ENCODE measurements at regions of chr9 and their contacts with region 1.

Region 1: DNA sequence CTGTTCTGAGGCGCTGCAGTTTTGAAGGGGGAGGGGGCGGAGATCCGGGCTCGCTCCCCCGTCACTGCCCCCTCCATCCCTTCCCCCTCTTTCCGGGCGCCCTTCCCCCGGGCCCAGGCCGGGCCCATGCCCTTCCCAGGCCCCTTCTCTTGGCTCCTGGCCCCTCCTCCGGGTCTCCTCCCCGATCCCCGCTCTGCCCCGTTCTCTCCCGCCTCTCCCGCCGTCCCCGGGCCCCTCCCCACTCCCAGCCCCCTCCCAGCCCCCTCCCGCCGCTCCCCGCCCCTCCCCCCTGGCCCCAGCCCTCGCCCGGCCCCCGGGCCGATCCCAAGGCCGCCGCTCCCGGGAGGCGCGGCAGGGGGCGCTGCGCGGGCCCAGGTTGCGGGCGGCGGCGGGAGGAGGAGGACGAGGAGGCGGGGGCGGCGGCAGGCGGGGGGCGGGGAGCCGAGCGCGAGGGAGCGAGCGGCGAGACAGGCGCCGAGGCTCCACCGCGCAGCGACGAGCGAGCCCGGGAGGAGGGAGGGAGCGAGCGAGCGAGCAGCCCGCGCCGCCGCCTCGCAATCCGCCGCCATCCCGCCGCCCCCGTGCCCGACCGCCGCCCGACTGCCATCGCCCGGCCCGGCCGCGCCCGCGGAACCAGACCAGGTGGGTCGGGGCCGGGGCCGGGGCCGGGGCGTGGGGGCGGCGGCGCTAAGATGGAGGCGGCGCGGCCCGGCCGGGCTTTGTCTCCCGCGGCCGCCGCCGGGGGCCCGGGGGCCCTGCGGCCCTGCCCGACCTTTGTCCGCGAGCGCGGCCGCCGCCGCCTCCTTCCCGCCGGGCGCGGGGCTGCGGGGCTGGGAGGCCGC is at the start of gene PRRC2B:
- DNase-seq: peak; percentile 76
- H3K4me3 Mint-ChIP-seq: peak within 1 kb of the TSS; percentile 89
- H3K27ac Mint-ChIP-seq: peak within 1 kb of the TSS; percentile 93
- H3K4me1 Mint-ChIP-seq: peaks cover 49% of the 10 kb centered on the region
- H3K27me3 Mint-ChIP-seq: peaks cover 21% of the 10 kb centered on the region
- total RNA-seq, gene PRRC2B: 103 and 108 TPM in 2 replicates

Region 2: DNA sequence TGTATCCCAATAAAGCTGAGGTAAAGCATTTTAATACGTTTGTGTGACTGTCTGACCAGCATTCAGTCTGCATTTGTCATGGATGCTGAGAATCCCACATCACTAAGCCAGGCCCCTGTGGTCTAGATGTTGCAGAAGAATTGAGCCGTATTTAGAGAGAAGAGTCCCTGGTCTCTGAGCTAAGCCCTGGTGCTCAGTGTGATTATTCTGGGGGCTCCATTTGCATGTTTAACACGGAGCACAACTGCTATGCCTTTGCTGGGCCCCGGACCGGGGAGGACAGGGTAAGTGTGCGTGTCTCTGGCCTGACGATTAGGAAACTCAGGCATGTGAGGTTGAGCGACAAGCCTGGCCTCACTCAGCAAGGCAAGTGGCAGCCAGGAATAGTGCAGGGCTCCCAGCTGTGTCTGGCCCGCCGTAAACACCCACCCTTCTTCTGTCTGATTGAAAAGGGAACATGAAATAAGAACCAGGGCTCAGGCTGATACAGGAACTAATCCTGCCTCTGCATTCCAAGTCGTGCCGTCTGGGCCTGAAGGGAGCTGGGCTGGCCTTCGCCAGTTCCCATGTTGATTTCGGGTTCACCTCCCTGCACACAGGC is 139.9 kb before region 1 on chr9:
- intact Hi-C with region 1: loop called (anchors 5 kb)
- DNase-seq: no peak
- H3K4me3 Mint-ChIP-seq: no peak overlapping the region
- H3K27ac Mint-ChIP-seq: peak overlapping the region; percentile 29
- H3K4me1 Mint-ChIP-seq: peaks cover 46% of the 10 kb centered on the region
- H3K27me3 Mint-ChIP-seq: no peaks in the 10 kb centered on the region

Region 3: GRCh38 chr9:131418143-131419028 is 24.5 kb after region 1 on chr9:
- intact Hi-C with region 1: loop called (anchors 1 kb)
- DNase-seq: no peak
- H3K4me3 Mint-ChIP-seq: peak overlapping the region; percentile 77
- H3K27ac Mint-ChIP-seq: peak overlapping the region; percentile 91
- H3K4me1 Mint-ChIP-seq: peaks cover 73% of the 10 kb centered on the region
- H3K27me3 Mint-ChIP-seq: no peaks in the 10 kb centered on the region

Measured in activated T-helper 1 cell treated with anti-CD3 and anti-CD28 coated beads, Interleukin-12 subunit alpha, Interleukin-12 subunit beta, Interleukin-2, Interleukin-4 antibody, amounts not matched to agents 30 ng/mL and 10 ng/mL and 1 ng/mL, durations not matched to agents 14 hours and 24 hours and 36 hours (primary cell).